Pancreas (tissue), 10 donors: ENCODE measurements at regions of chr22 and their contacts with region 1.

Region 1: GRCh38 chr22:40922484-40923303 is 28.5 kb upstream of the RBX1 start:
- DNase-seq: no peak
- ATAC-seq: peak; percentile 80 to 93 (median 92)
- H3K4me3 ChIP-seq: no peak overlapping the region
- H3K27ac ChIP-seq: no peak overlapping the region
- H3K4me1 ChIP-seq: peaks cover 0 to 4% (median 3%) of the 10 kb centered on the region in 3 donors
- H3K27me3 ChIP-seq: no peaks in the 10 kb centered on the region
- CTCF ChIP-seq: peak; percentile 30 to 72 (median 64)

Region 2: GRCh38 chr22:41237707-41238569 is 315.2 kb after region 1 on chr22:
- intact Hi-C with region 1: loop called in 2 of 3 experiments (anchors 10 kb)
- DNase-seq: peak; percentile 79 to 96 (median 87)
- ATAC-seq: peak; percentile 94 to 97 (median 95)
- H3K4me3 ChIP-seq: peak overlapping the region; percentile 20 to 47 (median 34)
- H3K27ac ChIP-seq: peak overlapping the region in 2 of 4 donors; percentile 46 to 51
- H3K4me1 ChIP-seq: peaks cover 5 to 10% (median 8%) of the 10 kb centered on the region in 3 donors
- H3K27me3 ChIP-seq: no peaks in the 10 kb centered on the region
- CTCF ChIP-seq: peak; percentile 42 to 68 (median 56)